RWPE1 (cell line): ENCODE measurements at regions of chr1 and their contacts with region 1.

Region 1: DNA sequence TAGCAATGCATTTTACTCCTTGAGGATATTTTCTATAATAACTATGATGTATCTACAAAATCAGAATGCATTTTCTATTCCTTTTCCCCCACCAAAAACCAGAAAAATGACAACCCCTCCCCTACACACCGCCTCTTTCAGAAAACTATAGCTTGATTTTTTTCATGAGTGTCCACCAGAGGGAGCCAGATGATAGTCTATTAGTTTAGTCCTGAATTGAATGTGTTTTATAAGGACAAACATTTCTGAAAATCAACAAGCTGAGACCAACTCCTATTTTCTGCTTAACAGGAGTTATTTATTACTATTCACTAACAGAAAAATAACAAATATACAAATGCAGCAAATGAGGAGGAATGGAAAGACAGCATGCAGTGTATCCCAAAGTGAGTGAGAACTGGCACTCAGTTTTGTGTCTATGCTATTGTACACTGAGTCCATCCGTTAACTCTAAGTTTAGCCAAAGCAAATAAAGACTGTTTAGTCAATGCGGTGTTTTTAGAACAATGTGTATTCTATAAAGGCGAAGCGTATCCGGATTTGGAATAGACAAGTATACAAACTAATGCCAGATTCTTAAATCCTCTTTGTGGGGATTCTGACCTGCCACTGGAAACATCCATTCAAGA is 182.6 kb downstream of the VAV3 start:
- DNase-seq: peak; percentile 14
- H3K27ac ChIP-seq: no peak overlapping the region
- CTCF ChIP-seq: peak; percentile 57

Region 2: GRCh38 chr1:108125312-108126138 is 343.2 kb after region 1 on chr1:
- CTCF ChIA-PET with region 1: interaction called, 108 read pairs
- POLR2A ChIA-PET with region 1: no interaction called
- DNase-seq: peak; percentile 59
- H3K27ac ChIP-seq: no peak overlapping the region
- CTCF ChIP-seq: peak; percentile 90